ENCODE measurements at regions of chr1 and their contacts with region 1.

Region 1: GRCh38 chr1:67053785-67054772 is at the start of gene SLC35D1:
- DNase-seq: peak; percentile 57 to 87 (median 77)
- ATAC-seq: peak; percentile 83 to 84
- H3K4me3 Mint-ChIP-seq: peak within 1 kb of the TSS; percentile 81 to 97 (median 94)
- H3K27ac Mint-ChIP-seq: peak within 1 kb of the TSS; percentile 88 to 98 (median 97)
- H3K4me1 Mint-ChIP-seq: peaks cover 14 to 31% (median 27%) of the 10 kb centered on the region in 4 donors
- H3K27me3 Mint-ChIP-seq: no peaks in the 10 kb centered on the region
- polyA plus RNA-seq, gene SLC35D1: 4.6 to 6.2 (median 5.7) TPM

Region 2: DNA sequence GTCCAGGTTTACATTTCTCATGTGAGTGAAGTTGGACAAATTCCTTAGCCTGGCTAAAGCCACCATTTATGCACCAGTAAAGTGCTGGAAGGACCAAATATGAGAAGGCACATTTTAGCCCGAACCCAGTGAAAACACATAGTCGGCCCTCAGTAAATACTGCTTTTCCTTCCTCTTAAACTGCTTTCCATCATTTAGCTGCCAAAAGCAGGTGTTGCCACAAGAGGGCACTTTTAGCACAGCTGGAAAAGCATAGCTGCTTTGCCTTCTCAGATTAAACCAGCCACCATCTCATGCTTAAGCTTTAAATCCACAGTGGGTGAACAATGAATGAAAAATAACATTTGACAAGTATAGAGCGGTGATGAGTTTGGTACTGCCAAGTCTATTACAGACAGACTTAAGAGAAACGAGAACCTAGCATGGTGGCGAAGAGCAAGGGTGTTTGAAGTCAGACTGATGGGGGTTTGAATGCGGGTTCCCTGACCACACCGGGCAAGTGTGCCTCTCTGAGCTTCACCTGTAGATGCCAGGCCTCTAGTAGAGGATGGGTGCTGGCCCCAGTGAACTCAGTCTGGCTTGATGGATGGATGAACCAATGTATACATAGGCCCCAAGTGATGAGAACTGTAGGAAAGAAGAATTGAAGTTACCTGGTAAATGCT is 57.9 kb before region 1 on chr1:
- POLR2A ChIA-PET with region 1: interaction called, 12 read pairs
- DNase-seq: peak in 9 of 10 donors; percentile 19 to 78 (median 58)
- ATAC-seq: peak; percentile 82 to 91
- H3K4me3 Mint-ChIP-seq: no peak overlapping the region
- H3K27ac Mint-ChIP-seq: peak overlapping the region in 7 of 10 donors; percentile 1 to 61 (median 24)
- H3K4me1 Mint-ChIP-seq: peaks cover 11 to 22% (median 19%) of the 10 kb centered on the region in 4 donors
- H3K27me3 Mint-ChIP-seq: no peaks in the 10 kb centered on the region

Region 3: DNA sequence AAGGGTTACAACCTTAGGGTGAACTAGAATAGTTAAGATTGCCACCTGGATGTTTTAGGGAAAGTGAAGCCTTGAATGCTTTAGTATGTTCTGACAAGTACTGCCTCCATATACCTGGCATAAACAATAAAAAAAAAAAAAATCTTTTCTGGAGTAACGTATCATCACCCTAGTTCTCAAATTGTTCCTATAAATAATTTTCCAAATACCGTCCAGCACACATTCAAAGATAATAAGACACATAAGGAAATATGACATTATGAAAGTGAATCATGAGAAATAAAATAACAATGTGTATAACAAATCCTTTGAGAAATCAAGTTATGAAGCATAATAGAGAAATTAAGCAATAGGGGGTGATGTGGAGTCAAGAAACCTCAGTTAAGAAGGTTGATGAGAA is 60.1 kb after region 1 on chr1:
- POLR2A ChIA-PET with region 1: no interaction called
- DNase-seq: no peak
- ATAC-seq: no peak
- H3K4me3 Mint-ChIP-seq: no peak overlapping the region
- H3K27ac Mint-ChIP-seq: no peak overlapping the region
- H3K4me1 Mint-ChIP-seq: peaks cover 7 to 26% (median 10%) of the 10 kb centered on the region in 4 donors
- H3K27me3 Mint-ChIP-seq: peaks cover 0 to 1% (median 0%) of the 10 kb centered on the region in 5 donors

Region 4: GRCh38 chr1:67140460-67140859 is 86.4 kb after region 1 on chr1:
- POLR2A ChIA-PET with region 1: interaction called, 16 read pairs
- DNase-seq: no peak
- ATAC-seq: no peak
- H3K4me3 Mint-ChIP-seq: no peak overlapping the region
- H3K27ac Mint-ChIP-seq: no peak overlapping the region
- H3K4me1 Mint-ChIP-seq: peaks cover 15 to 36% (median 29%) of the 10 kb centered on the region in 4 donors
- H3K27me3 Mint-ChIP-seq: peaks cover 0 to 1% (median 0%) of the 10 kb centered on the region in 5 donors

Region 5: DNA sequence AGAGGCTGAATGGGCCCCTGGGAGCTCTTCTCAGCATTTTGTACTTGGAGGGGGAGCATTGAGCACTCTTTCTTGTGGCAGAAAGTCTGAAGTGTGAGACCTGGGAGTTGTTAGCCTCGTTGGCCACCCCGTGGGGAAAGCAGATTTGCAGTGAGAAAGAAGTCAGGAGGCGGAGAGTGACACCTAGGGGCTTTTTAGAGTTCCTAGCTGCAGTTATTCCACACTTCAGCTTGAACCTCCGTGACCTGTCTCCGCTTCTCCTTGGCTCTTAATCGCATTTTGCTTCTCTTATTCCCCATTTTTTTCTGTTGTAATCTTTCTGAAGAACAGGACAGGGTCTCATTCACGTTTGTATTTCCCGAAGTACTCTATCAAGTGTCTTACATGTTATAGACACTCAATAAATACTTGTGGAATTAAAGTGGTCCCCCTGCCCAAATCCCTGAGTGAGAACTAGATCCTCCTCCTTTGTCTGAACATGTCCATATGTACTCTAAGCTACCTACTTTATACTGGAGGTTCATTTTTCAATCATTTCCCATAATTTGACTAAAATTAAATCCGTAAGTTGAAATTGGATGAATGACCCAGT is 95.2 kb after region 1 on chr1:
- POLR2A ChIA-PET with region 1: interaction called, 12 read pairs
- DNase-seq: peak; percentile 35 to 85 (median 67)
- ATAC-seq: peak; percentile 94 to 96
- H3K4me3 Mint-ChIP-seq: peak overlapping the region in 1 of 10 donors; percentile 54
- H3K27ac Mint-ChIP-seq: peak overlapping the region in 5 of 10 donors; percentile 18 to 66 (median 36)
- H3K4me1 Mint-ChIP-seq: peaks cover 14 to 35% (median 26%) of the 10 kb centered on the region in 4 donors
- H3K27me3 Mint-ChIP-seq: peaks cover 0 to 24% (median 9%) of the 10 kb centered on the region in 5 donors

Region 6: GRCh38 chr1:67211589-67212563 is 157.8 kb after region 1 on chr1:
- POLR2A ChIA-PET with region 1: interaction called, 11 read pairs
- DNase-seq: peak; percentile 11 to 75 (median 40)
- ATAC-seq: peak; percentile 72 to 74
- H3K4me3 Mint-ChIP-seq: peak overlapping the region in 5 of 10 donors; percentile 3 to 55 (median 18)
- H3K27ac Mint-ChIP-seq: peak overlapping the region in 3 of 10 donors; percentile 2 to 9 (median 7)
- H3K4me1 Mint-ChIP-seq: peaks cover 9 to 24% (median 21%) of the 10 kb centered on the region in 4 donors
- H3K27me3 Mint-ChIP-seq: no peaks in the 10 kb centered on the region

Region 7: GRCh38 chr1:67430352-67431155 is 376.5 kb after region 1 on chr1 and contains the start of gene SERBP1:
- POLR2A ChIA-PET with region 1: interaction called, 10 read pairs
- DNase-seq: peak; percentile 89 to 98 (median 94)
- ATAC-seq: peak; percentile 84 to 88
- H3K4me3 Mint-ChIP-seq: peak within 1 kb of the TSS; percentile 83 to 99 (median 96)
- H3K27ac Mint-ChIP-seq: peak within 1 kb of the TSS; percentile 93 to 100 (median 98)
- H3K4me1 Mint-ChIP-seq: peaks cover 26 to 68% (median 47%) of the 10 kb centered on the region in 4 donors
- H3K27me3 Mint-ChIP-seq: no peaks in the 10 kb centered on the region
- polyA plus RNA-seq, gene SERBP1: 130 to 156 (median 153) TPM

Measured in naive thymus-derived CD8-positive, alpha-beta T cell (primary cell).